Activated naive CD4-positive, alpha-beta T cell treated with anti-CD3 and anti-CD28 coated beads for 36 hours (primary cell): ENCODE measurements at regions of chr22 and their contacts with region 1.

Region 1: GRCh38 chr22:43945632-43946383 is 9.4 kb upstream of the SAMM50 start:
- DNase-seq: peak; percentile 80
- H3K4me3 Mint-ChIP-seq: no peak overlapping the region
- H3K27ac Mint-ChIP-seq: no peak overlapping the region
- H3K4me1 Mint-ChIP-seq: no peaks in the 10 kb centered on the region
- H3K27me3 Mint-ChIP-seq: peaks cover 6% of the 10 kb centered on the region

Region 2: DNA sequence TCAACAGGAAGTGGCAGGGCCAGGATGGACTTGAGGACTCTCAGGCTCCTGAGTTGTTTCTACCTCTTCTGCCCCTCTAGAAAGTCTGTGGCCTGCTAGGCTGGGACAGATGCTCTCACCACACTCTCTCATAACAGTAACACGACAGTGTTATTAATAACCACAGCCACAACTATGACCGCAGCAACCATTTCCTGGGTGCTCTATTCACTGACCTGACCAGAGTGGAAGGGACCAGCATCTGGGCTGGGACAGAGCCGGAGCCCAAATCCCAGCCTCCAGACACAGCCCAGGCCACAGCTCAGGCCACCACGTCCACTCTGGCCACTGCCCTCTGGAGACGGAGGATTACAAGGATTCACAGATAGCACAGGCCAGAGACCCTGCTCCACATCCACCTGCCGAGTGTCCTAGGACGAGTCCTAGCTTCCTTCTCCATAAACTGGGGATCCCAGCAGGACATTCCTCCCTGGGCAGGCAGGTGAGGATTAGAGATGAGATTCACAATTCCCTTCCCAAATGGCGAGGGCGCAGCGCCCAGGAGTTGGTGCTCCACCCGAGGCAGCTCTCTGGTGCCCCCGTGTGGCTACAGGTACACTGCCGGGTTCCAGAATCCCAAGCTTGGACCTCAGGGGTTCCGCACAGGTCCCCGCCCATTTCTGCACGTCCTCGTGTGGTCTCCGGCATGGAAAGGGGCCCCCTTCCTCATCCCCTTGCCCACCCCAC is 61.0 kb before region 1 on chr22:
- CTCF ChIA-PET with region 1: interaction called, 26 read pairs
- intact Hi-C with region 1: loop called (anchors 1 kb)
- DNase-seq: peak; percentile 60
- H3K4me3 Mint-ChIP-seq: no peak overlapping the region
- H3K27ac Mint-ChIP-seq: no peak overlapping the region
- H3K4me1 Mint-ChIP-seq: no peaks in the 10 kb centered on the region
- H3K27me3 Mint-ChIP-seq: peaks cover 25% of the 10 kb centered on the region

Region 3: GRCh38 chr22:43931771-43932170 is 14.0 kb before region 1 on chr22:
- CTCF ChIA-PET with region 1: interaction called, 13 read pairs
- intact Hi-C with region 1: no loop called
- DNase-seq: no peak
- H3K4me3 Mint-ChIP-seq: no peak overlapping the region
- H3K27ac Mint-ChIP-seq: no peak overlapping the region
- H3K4me1 Mint-ChIP-seq: no peaks in the 10 kb centered on the region
- H3K27me3 Mint-ChIP-seq: no peaks in the 10 kb centered on the region

Region 4: DNA sequence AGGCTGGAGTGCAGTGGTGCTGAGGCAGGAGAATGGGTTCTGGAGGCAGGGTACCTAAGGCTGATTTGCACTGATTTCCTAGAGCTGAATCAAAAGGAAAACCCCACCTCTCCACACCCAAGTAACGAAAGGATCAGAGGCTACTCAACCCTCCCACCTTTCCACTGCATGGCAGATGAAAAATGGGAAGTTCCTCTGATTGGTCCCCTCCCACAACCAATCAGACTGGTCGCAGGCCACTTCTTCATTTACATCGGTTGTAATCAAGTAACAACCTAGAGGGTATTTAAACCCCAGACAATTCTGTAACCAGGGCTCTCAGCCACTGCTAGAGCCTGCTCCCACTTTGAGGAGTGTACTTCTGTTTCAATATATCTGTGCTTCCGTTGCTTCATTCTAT is 59.7 kb after region 1 on chr22:
- CTCF ChIA-PET with region 1: no interaction called
- intact Hi-C with region 1: no loop called
- DNase-seq: no peak
- H3K4me3 Mint-ChIP-seq: no peak overlapping the region
- H3K27ac Mint-ChIP-seq: no peak overlapping the region
- H3K4me1 Mint-ChIP-seq: no peaks in the 10 kb centered on the region
- H3K27me3 Mint-ChIP-seq: no peaks in the 10 kb centered on the region